ENCODE measurements at regions of chr3 and their contacts with region 1.

Region 1: GRCh38 chr3:149969940-149970715 is 567 bp downstream of the PFN2 start:
- DNase-seq: peak; percentile 90
- H3K4me3 ChIP-seq: peak overlapping the region; percentile 65 to 92 (median 88)
- H3K27ac ChIP-seq: peak overlapping the region; percentile 94
- H3K4me1 ChIP-seq: peaks cover 27% of the 10 kb centered on the region
- H3K27me3 ChIP-seq: peaks cover 0 to 3% of the 10 kb centered on the region in 2 experiments
- CTCF ChIP-seq: no peak
- POLR2A ChIP-seq: peak; percentile 30

Region 2: DNA sequence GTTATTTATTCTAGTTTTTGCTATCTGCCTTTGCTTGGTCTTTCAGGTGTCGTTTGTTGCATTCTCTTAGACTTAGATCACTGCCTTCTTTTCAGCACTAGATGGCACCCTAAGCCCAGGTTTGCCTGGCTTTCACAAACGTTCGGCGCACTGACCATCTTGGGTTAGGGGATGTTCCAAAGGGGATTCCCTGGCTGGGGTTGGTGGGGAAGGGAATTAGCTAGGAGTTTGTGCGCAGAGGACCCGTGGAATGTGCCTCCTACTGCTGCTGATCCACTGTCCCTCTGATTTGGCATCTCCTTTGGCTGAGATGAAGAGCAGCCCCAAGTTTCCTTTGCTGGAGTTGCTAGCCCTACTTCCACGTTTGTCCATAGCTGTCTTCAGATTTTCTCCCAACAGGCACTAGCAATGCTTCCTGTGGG is 33.3 kb before region 1 on chr3:
- CTCF ChIA-PET with region 1: interaction called, 19 read pairs
- POLR2A ChIA-PET with region 1: interaction called, 4 read pairs
- dilution Hi-C with region 1: no loop called
- intact Hi-C with region 1: loop called (anchors 5 kb)
- DNase-seq: peak; percentile 70
- H3K4me3 ChIP-seq: no peak overlapping the region
- H3K27ac ChIP-seq: no peak overlapping the region
- H3K4me1 ChIP-seq: peaks cover 2% of the 10 kb centered on the region
- H3K27me3 ChIP-seq: no peaks in the 10 kb centered on the region
- CTCF ChIP-seq: peak; percentile 70 to 76
- POLR2A ChIP-seq: no peak

Region 3: GRCh38 chr3:150183678-150184425 is 213.7 kb after region 1 on chr3:
- CTCF ChIA-PET with region 1: interaction called, 87 read pairs
- POLR2A ChIA-PET with region 1: no interaction called
- dilution Hi-C with region 1: no loop called
- intact Hi-C with region 1: loop called (anchors 1 kb)
- DNase-seq: peak; percentile 80
- H3K4me3 ChIP-seq: peak overlapping the region; percentile 8 to 51 (median 31)
- H3K27ac ChIP-seq: peak overlapping the region; percentile 18
- H3K4me1 ChIP-seq: peaks cover 16% of the 10 kb centered on the region
- H3K27me3 ChIP-seq: peaks cover 0 to 6% of the 10 kb centered on the region in 2 experiments
- CTCF ChIP-seq: peak; percentile 63 to 65
- POLR2A ChIP-seq: no peak

Region 4: GRCh38 chr3:150227839-150228238 is 257.7 kb after region 1 on chr3:
- CTCF ChIA-PET with region 1: interaction called, 15 read pairs
- POLR2A ChIA-PET with region 1: interaction called, 4 read pairs
- dilution Hi-C with region 1: no loop called
- intact Hi-C with region 1: loop called (anchors 1 kb)
- DNase-seq: peak; percentile 72
- H3K4me3 ChIP-seq: no peak overlapping the region
- H3K27ac ChIP-seq: no peak overlapping the region
- H3K4me1 ChIP-seq: peaks cover 27% of the 10 kb centered on the region
- H3K27me3 ChIP-seq: peaks cover 25 to 26% of the 10 kb centered on the region in 2 experiments
- CTCF ChIP-seq: peak; percentile 82 to 84
- POLR2A ChIP-seq: no peak

Region 5: DNA sequence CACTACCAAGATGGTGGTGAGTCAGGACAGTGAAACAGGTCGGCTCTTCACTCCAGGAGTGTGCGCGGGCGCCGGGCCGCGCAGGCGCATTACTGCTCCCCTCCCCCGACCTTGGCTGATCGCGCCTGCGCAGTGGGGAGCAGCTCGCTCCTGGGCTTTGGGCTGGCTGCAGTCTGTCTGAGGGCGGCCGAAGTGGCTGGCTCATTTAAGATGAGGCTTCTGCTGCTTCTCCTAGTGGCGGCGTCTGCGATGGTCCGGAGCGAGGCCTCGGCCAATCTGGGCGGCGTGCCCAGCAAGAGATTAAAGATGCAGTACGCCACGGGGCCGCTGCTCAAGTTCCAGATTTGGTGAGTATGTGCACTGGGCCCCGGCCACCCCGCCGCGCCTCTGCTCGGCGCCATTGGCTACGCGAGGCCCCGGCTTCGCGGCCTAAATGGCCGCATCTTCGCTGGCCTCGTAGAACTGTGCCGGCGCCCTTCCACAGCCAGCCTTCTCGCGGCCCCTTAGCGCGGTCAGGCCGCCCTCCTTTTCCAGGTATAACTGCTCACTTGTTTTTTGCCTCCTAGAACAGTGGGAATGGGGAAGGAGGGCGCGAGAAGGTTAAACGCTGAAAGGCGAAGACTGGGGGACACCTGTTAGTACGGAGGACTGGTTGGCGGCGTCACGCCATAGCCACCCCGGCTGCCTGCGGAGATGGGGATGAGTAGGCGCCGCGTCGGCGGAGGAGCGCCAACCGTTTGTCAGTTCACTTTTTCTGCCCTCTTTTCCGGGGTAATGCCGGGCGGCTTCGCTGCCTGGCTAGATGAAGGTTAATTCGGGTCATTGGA is 633.2 kb after region 1 on chr3 and contains the start of gene SELENOT:
- CTCF ChIA-PET with region 1: no interaction called
- POLR2A ChIA-PET with region 1: no interaction called
- dilution Hi-C with region 1: no loop called
- intact Hi-C with region 1: loop called (anchors 5 kb)
- DNase-seq: peak; percentile 99
- H3K4me3 ChIP-seq: peak within 1 kb of the TSS; percentile 67 to 72 (median 72)
- H3K27ac ChIP-seq: peak within 1 kb of the TSS; percentile 81
- H3K4me1 ChIP-seq: peaks cover 31% of the 10 kb centered on the region
- H3K27me3 ChIP-seq: no peaks in the 10 kb centered on the region
- CTCF ChIP-seq: peak; percentile 14 to 30
- POLR2A ChIP-seq: peak; percentile 98
- total RNA-seq, gene SELENOT: 89.2 and 103 TPM in 2 replicates

Region 6: GRCh38 chr3:150763122-150763841 is 793.2 kb after region 1 on chr3 and contains the start of gene SIAH2:
- CTCF ChIA-PET with region 1: interaction called, 5 read pairs
- POLR2A ChIA-PET with region 1: no interaction called
- dilution Hi-C with region 1: no loop called
- intact Hi-C with region 1: loop called (anchors 1 kb)
- DNase-seq: peak; percentile 94
- H3K4me3 ChIP-seq: peak within 1 kb of the TSS; percentile 43 to 85 (median 64)
- H3K27ac ChIP-seq: peak within 1 kb of the TSS; percentile 86
- H3K4me1 ChIP-seq: peaks cover 19% of the 10 kb centered on the region
- H3K27me3 ChIP-seq: no peaks in the 10 kb centered on the region
- CTCF ChIP-seq: no peak
- POLR2A ChIP-seq: peak; percentile 92
- total RNA-seq, gene SIAH2: 16.0 and 16.7 TPM in 2 replicates

Measured in endothelial cell of umbilical vein (primary cell).